ENCODE measurements at regions of chr7 and their contacts with region 1.

Region 1: DNA sequence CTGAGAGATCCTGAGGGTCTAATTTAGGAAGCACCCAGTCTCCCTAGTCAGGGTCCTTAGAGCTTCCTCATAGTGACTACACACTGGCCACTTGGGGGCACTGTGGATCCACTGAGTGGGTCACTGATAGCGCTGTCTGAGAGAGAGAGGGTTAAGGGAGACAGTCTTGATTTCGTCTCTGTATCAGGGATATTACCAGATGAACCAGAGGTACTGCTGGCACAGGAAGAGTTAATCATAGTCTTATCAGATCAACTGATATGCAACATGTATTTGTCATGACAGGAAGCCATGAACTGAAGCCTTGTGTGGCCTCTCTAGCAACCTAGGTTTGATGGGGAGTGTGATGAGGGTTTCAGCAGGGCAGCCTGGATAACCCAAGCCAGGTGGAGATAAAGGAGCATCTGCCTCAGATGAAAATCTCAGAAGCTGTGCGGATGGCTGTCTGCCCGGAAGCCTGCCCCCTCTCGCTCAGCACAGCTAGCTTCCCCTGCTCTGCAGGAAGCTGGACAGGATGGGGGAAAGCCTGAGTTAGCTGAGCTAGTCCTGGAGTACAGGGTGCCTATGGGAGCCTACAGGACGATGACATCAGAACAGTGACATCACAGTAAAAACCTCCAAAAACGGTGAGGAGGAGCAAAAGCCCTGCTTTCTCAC is 214.0 kb upstream of the PRSS1 start:
- DNase-seq: peak; percentile 86
- H3K4me3 ChIP-seq: no peak overlapping the region
- H3K27ac ChIP-seq: peak overlapping the region; percentile 46
- H3K4me1 ChIP-seq: peaks cover 37% of the 10 kb centered on the region
- H3K27me3 ChIP-seq: no peaks in the 10 kb centered on the region
- CTCF ChIP-seq: peak; percentile 87 to 90
- POLR2A ChIP-seq: peak; percentile 45

Region 2: GRCh38 chr7:142516038-142516501 is 19.2 kb before region 1 on chr7:
- CTCF ChIA-PET with region 1: interaction called, 22 read pairs
- POLR2A ChIA-PET with region 1: no interaction called
- dilution Hi-C with region 1: no loop called
- intact Hi-C with region 1: no loop called
- DNase-seq: peak; percentile 65
- H3K4me3 ChIP-seq: no peak overlapping the region
- H3K27ac ChIP-seq: no peak overlapping the region
- H3K4me1 ChIP-seq: no peaks in the 10 kb centered on the region
- H3K27me3 ChIP-seq: peaks cover 9 to 13% of the 10 kb centered on the region in 2 experiments
- CTCF ChIP-seq: peak; percentile 75 to 79
- POLR2A ChIP-seq: no peak

Region 3: GRCh38 chr7:142581346-142581745 is 46.1 kb after region 1 on chr7:
- CTCF ChIA-PET with region 1: interaction called, 125 read pairs
- POLR2A ChIA-PET with region 1: no interaction called
- dilution Hi-C with region 1: no loop called
- intact Hi-C with region 1: no loop called
- DNase-seq: no peak
- H3K4me3 ChIP-seq: no peak overlapping the region
- H3K27ac ChIP-seq: no peak overlapping the region
- H3K4me1 ChIP-seq: peaks cover 10% of the 10 kb centered on the region
- H3K27me3 ChIP-seq: no peaks in the 10 kb centered on the region
- CTCF ChIP-seq: no peak
- POLR2A ChIP-seq: no peak

Region 4: DNA sequence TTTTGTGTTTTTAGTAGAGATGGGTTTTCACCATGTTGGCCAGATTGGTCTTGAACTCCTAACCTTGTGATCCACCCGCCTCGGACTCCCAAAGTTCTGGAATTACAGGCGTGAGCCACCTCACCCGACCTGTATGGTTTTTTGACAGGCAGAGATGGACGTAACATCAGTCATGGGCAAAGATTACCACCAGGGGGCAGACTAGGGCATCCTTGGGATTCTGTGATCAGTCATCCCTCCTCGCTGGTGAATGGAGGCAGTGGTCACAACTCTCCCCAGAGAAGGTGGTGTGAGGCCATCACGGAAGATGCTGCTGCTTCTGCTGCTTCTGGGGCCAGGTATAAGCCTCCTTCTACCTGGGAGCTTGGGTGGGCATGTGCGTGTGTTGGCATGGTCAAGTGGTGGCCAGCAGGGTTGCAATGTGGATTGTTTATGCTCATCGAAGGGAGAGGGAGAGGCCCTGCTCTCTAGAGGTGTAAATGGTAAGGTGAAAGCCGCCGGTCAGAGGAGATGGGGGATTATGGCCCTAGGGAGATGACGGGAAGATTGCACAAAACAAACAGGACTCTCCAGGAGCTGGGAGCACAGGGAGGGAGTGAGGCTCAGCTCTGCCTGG is 91.3 kb after region 1 on chr7:
- CTCF ChIA-PET with region 1: interaction called, 84 read pairs
- POLR2A ChIA-PET with region 1: no interaction called
- dilution Hi-C with region 1: no loop called
- intact Hi-C with region 1: loop called (anchors 1 kb)
- DNase-seq: peak; percentile 45
- H3K4me3 ChIP-seq: no peak overlapping the region
- H3K27ac ChIP-seq: no peak overlapping the region
- H3K4me1 ChIP-seq: no peaks in the 10 kb centered on the region
- H3K27me3 ChIP-seq: no peaks in the 10 kb centered on the region
- CTCF ChIP-seq: peak; percentile 60 to 76
- POLR2A ChIP-seq: no peak

Region 5: DNA sequence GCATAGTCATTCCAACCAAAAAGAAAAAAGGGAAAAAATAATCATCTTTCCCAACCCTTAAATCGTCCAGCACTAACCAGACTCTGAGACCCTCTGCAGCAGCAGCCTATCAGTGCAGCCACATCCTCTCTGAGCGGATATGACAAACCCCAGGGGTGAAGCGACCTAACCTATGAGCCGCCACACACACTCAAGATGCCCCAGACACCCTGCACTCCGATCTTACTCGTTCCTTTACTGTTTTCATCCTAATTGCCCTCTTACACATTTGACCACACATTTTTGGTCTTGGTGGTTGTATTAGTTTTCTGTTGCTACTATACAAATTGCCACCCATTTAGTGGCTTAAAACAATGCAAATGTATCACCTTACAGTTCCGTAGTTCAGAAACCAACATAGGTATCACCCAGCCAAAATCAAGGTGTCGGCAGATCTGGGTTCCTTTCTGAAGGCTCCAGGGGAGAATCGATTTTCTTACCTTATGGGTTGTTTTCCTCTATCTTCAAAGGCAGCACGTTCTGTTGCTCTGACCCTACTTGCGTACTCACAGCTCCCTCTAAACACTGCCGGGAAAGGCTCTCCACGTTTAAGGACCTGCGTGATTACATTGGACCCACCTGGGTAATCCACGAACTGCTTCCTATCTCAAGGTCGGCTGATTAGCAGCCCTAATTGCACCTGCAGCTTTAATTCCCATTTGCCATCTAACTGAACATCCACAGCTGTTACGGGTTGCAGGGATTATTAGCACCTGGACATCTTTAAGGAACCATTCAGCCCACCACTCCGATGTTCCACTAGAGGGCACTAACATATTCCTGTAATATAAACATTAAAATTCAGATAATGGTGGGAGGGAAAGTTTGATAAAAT is 176.7 kb after region 1 on chr7:
- CTCF ChIA-PET with region 1: interaction called, 8 read pairs
- POLR2A ChIA-PET with region 1: no interaction called
- dilution Hi-C with region 1: no loop called
- intact Hi-C with region 1: loop called (anchors 1 kb)
- DNase-seq: peak; percentile 44
- H3K4me3 ChIP-seq: no peak overlapping the region
- H3K27ac ChIP-seq: no peak overlapping the region
- H3K4me1 ChIP-seq: peaks cover 20% of the 10 kb centered on the region
- H3K27me3 ChIP-seq: peaks cover 7 to 16% of the 10 kb centered on the region in 2 experiments
- CTCF ChIP-seq: peak; percentile 52 to 69
- POLR2A ChIP-seq: no peak

Region 6: GRCh38 chr7:143008007-143008901 is 473.0 kb after region 1 on chr7:
- CTCF ChIA-PET with region 1: interaction called, 43 read pairs
- POLR2A ChIA-PET with region 1: no interaction called
- dilution Hi-C with region 1: no loop called
- intact Hi-C with region 1: loop called (anchors 1 kb)
- DNase-seq: peak; percentile 62
- H3K4me3 ChIP-seq: no peak overlapping the region
- H3K27ac ChIP-seq: no peak overlapping the region
- H3K4me1 ChIP-seq: peaks cover under 1% of the 10 kb centered on the region
- H3K27me3 ChIP-seq: peaks cover 15 to 18% of the 10 kb centered on the region in 2 experiments
- CTCF ChIP-seq: peak; percentile 88 to 91
- POLR2A ChIP-seq: no peak